Naive thymus-derived CD4-positive, alpha-beta T cell (primary cell): ENCODE measurements at regions of chr7 and their contacts with region 1.

Region 1: GRCh38 chr7:149028346-149029109 is at the start of gene PDIA4:
- DNase-seq: peak; percentile 97 to 100 (median 99)
- ATAC-seq: peak; percentile 92
- H3K4me3 ChIP-seq: peak within 1 kb of the TSS; percentile 65
- H3K4me3 Mint-ChIP-seq: peak within 1 kb of the TSS; percentile 82 to 95 (median 92)
- H3K27ac ChIP-seq: peak within 1 kb of the TSS; percentile 89
- H3K27ac Mint-ChIP-seq: peak within 1 kb of the TSS; percentile 89 to 96 (median 93)
- H3K4me1 ChIP-seq: peaks cover 16 to 17% of the 10 kb centered on the region in 2 donors
- H3K4me1 Mint-ChIP-seq: peaks cover 27 to 48% (median 41%) of the 10 kb centered on the region in 7 donors
- H3K27me3 ChIP-seq: no peaks in the 10 kb centered on the region
- H3K27me3 Mint-ChIP-seq: peaks cover 0 to 4% (median 0%) of the 10 kb centered on the region in 5 donors
- total RNA-seq, gene PDIA4: 38.2 to 157 (median 73.7) TPM

Region 2: DNA sequence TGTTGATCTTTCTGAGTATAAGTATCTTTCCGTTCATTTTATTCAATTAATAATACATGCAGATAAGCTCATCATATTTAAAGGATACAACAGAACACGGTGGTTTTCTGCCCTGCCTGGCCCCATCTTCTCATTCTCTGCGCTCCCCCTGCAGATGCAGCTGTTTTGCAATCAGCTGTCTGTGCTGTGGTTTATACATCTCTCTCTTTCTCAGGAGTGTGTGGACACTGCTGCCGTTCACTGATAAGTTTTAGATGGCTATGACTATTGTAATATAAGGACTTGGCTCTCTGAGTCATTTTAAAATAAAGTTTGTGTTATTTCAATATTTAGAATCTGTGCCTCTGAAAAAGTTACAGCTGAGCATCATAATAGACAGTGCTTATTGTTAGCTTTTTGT is 275.3 kb before region 1 on chr7:
- CTCF ChIA-PET with region 1: no interaction called
- POLR2A ChIA-PET with region 1: no interaction called
- intact Hi-C with region 1: no loop called
- DNase-seq: no peak
- ATAC-seq: no peak
- H3K4me3 ChIP-seq: no peak overlapping the region
- H3K4me3 Mint-ChIP-seq: no peak overlapping the region
- H3K27ac ChIP-seq: no peak overlapping the region
- H3K27ac Mint-ChIP-seq: peak overlapping the region in 1 of 9 donors; percentile 43
- H3K4me1 ChIP-seq: no peaks in the 10 kb centered on the region
- H3K4me1 Mint-ChIP-seq: peaks cover 11 to 35% (median 22%) of the 10 kb centered on the region in 7 donors
- H3K27me3 ChIP-seq: no peaks in the 10 kb centered on the region
- H3K27me3 Mint-ChIP-seq: no peaks in the 10 kb centered on the region

Region 3: DNA sequence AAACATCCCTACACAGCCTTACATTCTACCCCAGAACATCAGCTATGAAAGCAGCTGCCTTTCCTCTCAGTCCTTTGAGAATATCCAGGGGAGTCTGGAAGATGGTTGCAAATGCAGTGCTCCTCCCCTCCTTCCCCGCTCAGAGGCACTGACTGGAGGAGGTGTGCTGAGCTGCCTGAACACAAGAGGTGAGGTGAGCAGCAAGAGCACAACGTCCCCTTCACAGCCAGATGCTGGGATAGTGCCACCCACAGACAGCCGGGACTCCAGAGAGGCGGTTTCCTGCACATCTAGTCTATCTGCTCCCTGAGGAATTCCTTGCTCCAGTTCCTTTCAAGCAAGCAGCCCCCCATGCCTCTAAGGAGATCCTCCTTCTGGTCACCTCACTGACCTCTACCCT is 218.7 kb before region 1 on chr7:
- CTCF ChIA-PET with region 1: no interaction called
- POLR2A ChIA-PET with region 1: no interaction called
- intact Hi-C with region 1: no loop called
- DNase-seq: no peak
- ATAC-seq: no peak
- H3K4me3 ChIP-seq: no peak overlapping the region
- H3K4me3 Mint-ChIP-seq: no peak overlapping the region
- H3K27ac ChIP-seq: no peak overlapping the region
- H3K27ac Mint-ChIP-seq: peak overlapping the region in 4 of 9 donors; percentile 0 to 53 (median 40)
- H3K4me1 ChIP-seq: no peaks in the 10 kb centered on the region
- H3K4me1 Mint-ChIP-seq: peaks cover 0 to 23% (median 12%) of the 10 kb centered on the region in 7 donors
- H3K27me3 ChIP-seq: no peaks in the 10 kb centered on the region
- H3K27me3 Mint-ChIP-seq: no peaks in the 10 kb centered on the region

Region 4: GRCh38 chr7:148884299-148885022 is 144.1 kb before region 1 on chr7:
- CTCF ChIA-PET with region 1: no interaction called
- POLR2A ChIA-PET with region 1: interaction called, 4 read pairs
- intact Hi-C with region 1: loop called (anchors 1 kb)
- DNase-seq: peak; percentile 89 to 96 (median 94)
- ATAC-seq: peak; percentile 94
- H3K4me3 ChIP-seq: peak overlapping the region; percentile 57
- H3K4me3 Mint-ChIP-seq: peak overlapping the region; percentile 85 to 98 (median 94)
- H3K27ac ChIP-seq: peak overlapping the region; percentile 97
- H3K27ac Mint-ChIP-seq: peak overlapping the region; percentile 89 to 98 (median 93)
- H3K4me1 ChIP-seq: peaks cover 6 to 7% of the 10 kb centered on the region in 2 donors
- H3K4me1 Mint-ChIP-seq: peaks cover 0 to 45% (median 29%) of the 10 kb centered on the region in 7 donors
- H3K27me3 ChIP-seq: no peaks in the 10 kb centered on the region
- H3K27me3 Mint-ChIP-seq: no peaks in the 10 kb centered on the region

Region 5: GRCh38 chr7:149005241-149006050 is 23.1 kb before region 1 on chr7:
- CTCF ChIA-PET with region 1: interaction called, 9 read pairs
- POLR2A ChIA-PET with region 1: interaction called, 25 read pairs
- intact Hi-C with region 1: loop called (anchors 1 kb)
- DNase-seq: peak; percentile 57 to 80 (median 73)
- ATAC-seq: peak; percentile 96
- H3K4me3 ChIP-seq: no peak overlapping the region
- H3K4me3 Mint-ChIP-seq: no peak overlapping the region
- H3K27ac ChIP-seq: no peak overlapping the region
- H3K27ac Mint-ChIP-seq: peak overlapping the region in 5 of 9 donors; percentile 65 to 90 (median 74)
- H3K4me1 ChIP-seq: no peaks in the 10 kb centered on the region
- H3K4me1 Mint-ChIP-seq: peaks cover 0 to 9% (median 5%) of the 10 kb centered on the region in 7 donors
- H3K27me3 ChIP-seq: no peaks in the 10 kb centered on the region
- H3K27me3 Mint-ChIP-seq: no peaks in the 10 kb centered on the region

Region 6: GRCh38 chr7:149147072-149147751 is 118.7 kb after region 1 on chr7 and contains the start of gene ZNF398:
- CTCF ChIA-PET with region 1: interaction called, 3 read pairs
- POLR2A ChIA-PET with region 1: no interaction called
- intact Hi-C with region 1: loop called (anchors 1 kb)
- DNase-seq: peak; percentile 77 to 91 (median 85)
- ATAC-seq: peak; percentile 92
- H3K4me3 ChIP-seq: peak within 1 kb of the TSS; percentile 98
- H3K4me3 Mint-ChIP-seq: peak within 1 kb of the TSS; percentile 88 to 98 (median 93)
- H3K27ac ChIP-seq: peak within 1 kb of the TSS; percentile 86
- H3K27ac Mint-ChIP-seq: peak within 1 kb of the TSS; percentile 90 to 98 (median 95)
- H3K4me1 ChIP-seq: peaks cover 8 to 23% of the 10 kb centered on the region in 2 donors
- H3K4me1 Mint-ChIP-seq: peaks cover 24 to 52% (median 42%) of the 10 kb centered on the region in 7 donors
- H3K27me3 ChIP-seq: no peaks in the 10 kb centered on the region
- H3K27me3 Mint-ChIP-seq: no peaks in the 10 kb centered on the region
- total RNA-seq, gene ZNF398: 14.6 to 27.9 (median 16.9) TPM

Region 7: DNA sequence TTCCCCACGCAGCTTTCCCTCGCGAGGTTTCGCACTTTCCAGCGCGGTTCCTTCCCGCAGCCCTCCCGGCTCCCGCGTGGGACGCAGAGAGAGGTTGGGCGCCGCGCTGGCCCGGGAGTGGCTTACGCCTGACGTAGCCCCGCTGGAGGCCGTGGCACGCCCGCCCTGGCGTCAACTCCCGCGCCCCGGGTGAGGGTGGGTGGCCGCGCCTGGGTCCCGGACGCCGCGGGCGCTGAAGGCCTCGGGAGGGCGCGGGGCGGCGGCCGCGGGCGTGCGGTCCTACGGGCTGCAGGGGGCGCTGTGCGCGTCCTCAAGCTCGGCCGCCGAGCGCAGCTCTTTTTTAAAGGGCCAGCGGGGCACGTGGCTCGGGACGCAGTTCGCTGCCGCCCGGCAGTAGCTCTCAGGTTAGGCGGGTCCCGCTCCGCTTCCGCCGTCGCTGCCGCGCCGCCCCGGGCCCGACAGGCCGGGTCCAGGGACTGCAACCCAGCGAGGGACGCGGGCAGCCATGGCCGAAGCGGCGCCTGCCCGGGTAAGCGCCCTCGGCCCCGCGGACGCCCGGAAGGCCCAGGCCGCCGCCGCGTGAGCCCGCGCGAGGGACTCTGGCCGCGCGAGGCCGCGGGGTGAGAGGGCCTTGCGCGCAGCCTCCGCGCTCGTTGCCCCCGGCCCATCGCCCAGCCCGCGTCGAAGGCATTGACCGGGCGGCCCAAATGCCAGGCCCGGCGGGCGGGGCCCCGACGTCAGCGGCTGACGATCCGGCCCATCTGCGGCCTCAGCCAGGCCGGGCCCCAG is 233.5 kb after region 1 on chr7 and contains the start of gene ZNF783:
- CTCF ChIA-PET with region 1: no interaction called
- POLR2A ChIA-PET with region 1: no interaction called
- intact Hi-C with region 1: loop called (anchors 1 to 5 kb)
- DNase-seq: peak; percentile 77 to 88 (median 86)
- ATAC-seq: peak; percentile 97
- H3K4me3 ChIP-seq: peak within 1 kb of the TSS; percentile 74
- H3K4me3 Mint-ChIP-seq: peak within 1 kb of the TSS; percentile 83 to 91 (median 88)
- H3K27ac ChIP-seq: peak within 1 kb of the TSS; percentile 71
- H3K27ac Mint-ChIP-seq: peak within 1 kb of the TSS; percentile 84 to 93 (median 90)
- H3K4me1 ChIP-seq: peaks cover 19 to 20% of the 10 kb centered on the region in 2 donors
- H3K4me1 Mint-ChIP-seq: peaks cover 22 to 46% (median 32%) of the 10 kb centered on the region in 7 donors
- H3K27me3 ChIP-seq: no peaks in the 10 kb centered on the region
- H3K27me3 Mint-ChIP-seq: no peaks in the 10 kb centered on the region
- total RNA-seq, gene ZNF783: 23.3 to 49.2 (median 36.0) TPM

Region 8: DNA sequence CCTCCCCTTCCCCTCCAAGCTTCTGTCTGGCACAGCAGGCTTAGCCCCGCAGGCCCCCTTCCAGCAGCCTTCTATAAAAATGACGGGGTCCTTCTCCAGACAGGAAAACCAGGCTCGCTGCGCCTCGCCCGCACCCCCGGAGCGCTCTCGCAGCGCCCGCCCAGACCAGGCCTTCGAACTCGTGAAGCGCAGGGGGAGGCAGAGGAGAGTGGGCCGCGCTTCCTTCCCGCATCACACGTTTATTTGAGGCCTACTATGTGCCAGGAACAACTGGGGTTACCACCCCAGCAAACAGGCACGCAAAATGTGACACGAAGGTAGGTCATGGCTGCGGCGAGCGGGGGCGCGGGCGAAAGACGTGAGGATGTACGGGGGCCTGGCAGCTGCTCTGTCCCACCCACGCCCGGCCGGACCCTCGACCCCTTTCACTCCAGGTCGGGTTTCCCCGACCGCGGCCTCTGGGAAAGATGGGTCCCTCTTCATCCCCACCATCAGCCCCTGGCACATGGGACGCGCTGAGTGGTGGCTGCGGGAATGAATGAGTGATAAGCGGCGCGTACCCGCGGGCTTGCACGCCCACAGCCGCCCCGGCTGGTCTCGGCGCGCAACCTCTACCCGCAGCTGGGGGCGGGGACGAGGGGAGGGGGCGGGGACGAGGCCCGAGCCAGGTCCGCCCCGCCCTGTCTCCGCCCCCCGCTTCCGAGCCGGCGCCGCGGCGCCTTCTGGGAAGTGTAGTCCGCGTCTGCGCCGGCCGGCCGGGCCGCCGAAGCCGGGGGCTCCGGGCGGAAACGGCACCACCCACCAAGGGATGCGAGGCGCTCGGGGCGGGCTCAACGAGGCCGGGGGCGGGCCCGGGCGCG is 685.8 kb after region 1 on chr7:
- CTCF ChIA-PET with region 1: no interaction called
- POLR2A ChIA-PET with region 1: no interaction called
- intact Hi-C with region 1: loop called in 1 of 2 experiments (anchors 10 kb)
- DNase-seq: peak; percentile 68 to 89 (median 84)
- ATAC-seq: peak; percentile 99
- H3K4me3 ChIP-seq: peak overlapping the region; percentile 75
- H3K4me3 Mint-ChIP-seq: peak overlapping the region; percentile 71 to 87 (median 80)
- H3K27ac ChIP-seq: peak overlapping the region; percentile 72
- H3K27ac Mint-ChIP-seq: peak overlapping the region in 4 of 9 donors; percentile 5 to 72 (median 54)
- H3K4me1 ChIP-seq: peaks cover 10 to 13% of the 10 kb centered on the region in 2 donors
- H3K4me1 Mint-ChIP-seq: peaks cover 12 to 26% (median 19%) of the 10 kb centered on the region in 7 donors
- H3K27me3 ChIP-seq: no peaks in the 10 kb centered on the region
- H3K27me3 Mint-ChIP-seq: peaks cover 0 to 4% (median 0%) of the 10 kb centered on the region in 5 donors

Region 9: DNA sequence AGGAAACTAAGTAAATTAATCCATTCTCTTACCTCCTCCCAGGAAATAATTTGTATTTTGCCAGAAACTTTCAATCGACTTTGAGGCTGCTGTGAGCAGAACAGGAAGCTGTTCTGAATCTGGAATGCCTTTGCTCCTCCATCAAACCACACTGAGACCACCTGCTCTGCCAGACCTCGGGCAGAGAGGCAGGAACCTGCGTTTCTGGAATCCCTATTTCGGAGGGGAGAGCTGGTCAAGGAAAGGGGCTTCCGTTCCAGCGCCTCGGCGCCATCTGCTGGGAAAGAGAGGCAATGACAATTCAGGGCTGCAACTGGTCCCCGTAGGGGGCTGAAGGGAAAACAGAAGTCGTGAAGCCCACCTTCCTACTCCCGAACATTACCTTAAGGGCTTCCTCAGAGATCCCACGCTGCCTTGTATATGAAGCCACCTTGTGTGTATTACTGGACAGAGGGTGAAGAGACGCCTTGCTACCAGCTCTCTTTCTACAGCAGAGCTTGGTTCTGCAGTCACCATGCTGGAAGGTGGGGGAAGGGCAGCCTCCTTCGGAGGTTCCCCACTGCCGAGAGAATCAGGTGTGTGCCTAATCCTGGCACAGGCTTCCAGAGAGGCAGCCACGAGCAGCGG is 713.7 kb after region 1 on chr7:
- CTCF ChIA-PET with region 1: no interaction called
- POLR2A ChIA-PET with region 1: no interaction called
- intact Hi-C with region 1: no loop called
- DNase-seq: peak in 8 of 9 donors; percentile 32 to 64 (median 44)
- ATAC-seq: peak; percentile 79
- H3K4me3 ChIP-seq: peak overlapping the region; percentile 51
- H3K4me3 Mint-ChIP-seq: peak overlapping the region; percentile 70 to 88 (median 79)
- H3K27ac ChIP-seq: no peak overlapping the region
- H3K27ac Mint-ChIP-seq: peak overlapping the region in 2 of 9 donors; percentile 7 to 43
- H3K4me1 ChIP-seq: peaks cover 7 to 9% of the 10 kb centered on the region in 2 donors
- H3K4me1 Mint-ChIP-seq: peaks cover 10 to 14% (median 11%) of the 10 kb centered on the region in 7 donors
- H3K27me3 ChIP-seq: peaks cover 0 to 4% of the 10 kb centered on the region in 2 donors
- H3K27me3 Mint-ChIP-seq: peaks cover 35 to 51% (median 43%) of the 10 kb centered on the region in 5 donors

Region 10: DNA sequence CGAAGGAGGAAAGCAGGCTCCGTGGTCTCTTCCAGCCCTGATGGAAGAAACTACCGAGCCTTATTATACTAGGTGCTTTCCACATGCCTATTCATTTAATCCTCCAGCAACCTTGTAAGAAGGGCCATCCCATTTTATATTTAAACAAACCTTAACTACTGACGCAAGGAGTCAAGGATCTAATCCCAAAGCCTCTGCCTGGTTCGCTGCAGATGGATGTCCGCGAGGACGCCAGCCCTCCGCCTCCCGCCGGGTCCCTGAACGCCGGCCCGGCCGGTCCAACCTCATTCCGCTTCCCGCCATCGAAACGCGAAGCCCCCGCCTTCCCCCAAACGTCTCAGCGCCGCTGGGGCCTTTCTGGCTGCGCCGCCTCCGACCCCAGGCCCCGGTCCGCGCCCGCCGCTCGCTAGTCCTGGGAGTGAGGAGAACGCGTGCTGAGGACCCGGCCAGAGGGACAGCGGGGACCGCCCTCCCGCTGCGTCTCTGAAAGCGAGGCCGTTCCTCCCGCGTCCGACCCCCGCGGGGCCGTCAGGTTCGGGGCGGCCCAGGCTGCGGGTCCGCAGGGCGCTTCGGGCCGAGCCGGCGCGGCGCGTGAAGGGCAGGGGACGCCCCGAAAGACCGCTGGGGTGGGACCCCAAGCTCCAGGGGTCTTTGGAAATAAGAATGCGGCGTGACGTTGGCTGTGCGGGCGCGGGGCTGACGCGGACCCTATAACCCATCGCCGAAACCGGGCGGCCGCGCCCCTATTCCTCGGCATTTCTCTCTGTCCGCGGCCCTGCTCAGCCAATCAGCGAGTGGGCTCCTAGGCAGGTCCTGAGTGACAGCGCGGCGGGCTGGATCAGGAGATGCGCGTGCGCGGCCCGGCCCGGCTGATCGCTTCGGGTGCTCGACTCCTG is 844.8 kb after region 1 on chr7 and contains the start of gene ATP6V0E2:
- CTCF ChIA-PET with region 1: no interaction called
- POLR2A ChIA-PET with region 1: no interaction called
- intact Hi-C with region 1: loop called (anchors 1 to 5 kb)
- DNase-seq: peak; percentile 81 to 92 (median 85)
- ATAC-seq: peak; percentile 84
- H3K4me3 ChIP-seq: peak within 1 kb of the TSS; percentile 76
- H3K4me3 Mint-ChIP-seq: peak within 1 kb of the TSS; percentile 79 to 95 (median 91)
- H3K27ac ChIP-seq: peak within 1 kb of the TSS; percentile 88
- H3K27ac Mint-ChIP-seq: peak within 1 kb of the TSS; percentile 48 to 98 (median 92)
- H3K4me1 ChIP-seq: peaks cover 56% of the 10 kb centered on the region in 2 donors
- H3K4me1 Mint-ChIP-seq: peaks cover 45 to 89% (median 81%) of the 10 kb centered on the region in 7 donors
- H3K27me3 ChIP-seq: no peaks in the 10 kb centered on the region
- H3K27me3 Mint-ChIP-seq: no peaks in the 10 kb centered on the region
- total RNA-seq, gene ATP6V0E2: 32.7 to 84.0 (median 55.4) TPM